ENCODE measurements at regions of chr6 and their contacts with region 1.

Region 1: DNA sequence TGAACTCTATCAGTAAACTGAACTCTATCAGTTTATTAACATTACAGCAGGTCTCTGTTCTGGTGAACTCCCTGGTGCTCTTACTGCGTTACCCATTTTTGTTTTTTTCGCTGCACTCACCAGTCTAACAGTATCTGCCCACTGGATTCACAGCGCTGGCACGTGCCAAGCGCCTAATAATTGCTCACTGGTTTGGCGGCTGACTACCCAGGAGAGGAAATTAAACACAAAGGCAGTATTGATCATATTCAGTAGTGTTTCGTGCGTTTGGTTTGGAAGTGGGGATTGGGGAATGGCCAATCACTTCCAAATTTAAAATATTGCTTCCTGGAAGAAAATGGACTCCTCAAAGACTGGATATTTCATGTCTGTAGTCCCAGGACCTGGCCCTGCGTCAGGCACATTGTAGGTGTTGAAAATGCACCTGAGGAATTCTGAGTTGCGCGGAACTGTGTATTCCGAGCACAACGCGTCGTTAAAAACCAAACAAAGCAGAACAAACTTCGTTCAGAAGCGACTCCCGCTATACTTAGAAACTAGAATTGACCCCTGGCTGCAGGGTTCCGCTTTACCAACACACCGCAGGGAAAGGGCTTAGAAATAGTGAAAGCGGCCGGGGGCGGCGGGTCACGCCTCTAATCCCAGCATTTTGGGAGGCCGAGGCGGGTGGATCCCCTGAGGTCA is 1.1 kb upstream of the RPS12 start:
- DNase-seq: peak; percentile 82
- H3K4me3 ChIP-seq: peak overlapping the region; percentile 80
- H3K27ac ChIP-seq: peak overlapping the region; percentile 77
- H3K4me1 ChIP-seq: peaks cover 29% of the 10 kb centered on the region
- H3K27me3 ChIP-seq: no peaks in the 10 kb centered on the region

Region 2: DNA sequence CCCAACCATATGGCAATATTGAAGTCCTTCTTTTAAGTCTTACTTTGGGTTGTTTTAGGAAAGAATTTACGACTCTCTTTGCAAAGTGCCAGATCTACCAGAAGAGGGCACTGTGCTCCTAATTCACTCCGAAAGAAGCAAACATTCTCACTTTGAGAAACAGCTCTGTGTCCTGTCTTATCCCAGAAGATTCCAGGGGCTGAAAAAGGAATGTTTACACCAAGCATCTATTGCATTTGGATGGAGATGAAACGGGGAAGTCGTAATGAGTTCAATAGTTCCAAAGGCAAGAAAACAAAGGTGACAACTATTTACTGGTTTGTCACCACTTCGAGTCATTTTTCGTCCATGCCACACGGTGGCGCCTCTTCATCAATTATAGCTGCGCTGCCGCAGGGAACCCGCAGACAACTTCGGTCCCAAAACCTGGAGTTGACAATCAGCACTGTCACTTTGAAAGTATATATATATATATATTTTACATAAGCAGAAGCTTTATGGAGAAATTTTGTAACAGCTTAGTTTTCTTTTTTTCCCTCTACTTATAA is 533.6 kb before region 1 on chr6:
- in situ Hi-C with region 1: loop called (anchors 25 kb)
- DNase-seq: peak; percentile 84
- H3K4me3 ChIP-seq: peak overlapping the region; percentile 83
- H3K27ac ChIP-seq: no peak overlapping the region
- H3K4me1 ChIP-seq: no peaks in the 10 kb centered on the region
- H3K27me3 ChIP-seq: no peaks in the 10 kb centered on the region